ENCODE measurements at regions of chr2 and their contacts with region 1.

Region 1: GRCh38 chr2:168194784-168195522 is 52.4 kb downstream of the STK39 start:
- DNase-seq: peak; percentile 75
- H3K4me3 Mint-ChIP-seq: peak overlapping the region; percentile 71
- H3K27ac Mint-ChIP-seq: peak overlapping the region; percentile 92
- H3K4me1 Mint-ChIP-seq: peaks cover 48% of the 10 kb centered on the region
- H3K27me3 Mint-ChIP-seq: no peaks in the 10 kb centered on the region

Region 2: GRCh38 chr2:168166902-168167510 is 27.9 kb before region 1 on chr2:
- intact Hi-C with region 1: loop called (anchors 1 kb)
- DNase-seq: no peak
- H3K4me3 Mint-ChIP-seq: peak overlapping the region; percentile 5
- H3K27ac Mint-ChIP-seq: peak overlapping the region; percentile 67
- H3K4me1 Mint-ChIP-seq: peaks cover 40% of the 10 kb centered on the region
- H3K27me3 Mint-ChIP-seq: no peaks in the 10 kb centered on the region

Region 3: GRCh38 chr2:168233762-168234406 is 38.9 kb after region 1 on chr2:
- intact Hi-C with region 1: loop called (anchors 1 kb)
- DNase-seq: no peak
- H3K4me3 Mint-ChIP-seq: peak overlapping the region; percentile 18
- H3K27ac Mint-ChIP-seq: peak overlapping the region; percentile 60
- H3K4me1 Mint-ChIP-seq: peaks cover 21% of the 10 kb centered on the region
- H3K27me3 Mint-ChIP-seq: no peaks in the 10 kb centered on the region